Heart left ventricle (tissue), 16 donors: ENCODE measurements at regions of chr20 and their contacts with region 1.

Region 1: GRCh38 chr20:59032023-59032712 is at the start of gene ATP5F1E:
- DNase-seq: peak; percentile 97 to 98 (median 98)
- ATAC-seq: peak; percentile 99 to 100 (median 100)
- H3K4me3 ChIP-seq: peak within 1 kb of the TSS; percentile 59 to 94 (median 83)
- H3K27ac ChIP-seq: peak within 1 kb of the TSS; percentile 83 to 98 (median 92)
- H3K4me1 ChIP-seq: peaks cover 0 to 52% (median 48%) of the 10 kb centered on the region in 12 donors
- H3K27me3 ChIP-seq: no peaks in the 10 kb centered on the region
- CTCF ChIP-seq: peak in 1 of 12 donors; percentile 3
- POLR2A ChIP-seq: peak; percentile 86 to 97
- total RNA-seq, gene ATP5F1E: 38.5 to 153 (median 116) TPM

Region 2: GRCh38 chr20:58907399-58908137 is 124.6 kb before region 1 on chr20:
- intact Hi-C with region 1: loop called in 1 of 10 experiments (anchors 5 kb)
- DNase-seq: peak; percentile 86 to 94 (median 94)
- ATAC-seq: peak; percentile 91 to 98 (median 94)
- H3K4me3 ChIP-seq: peak overlapping the region in 9 of 12 donors; percentile 5 to 46 (median 30)
- H3K27ac ChIP-seq: peak overlapping the region; percentile 64 to 93 (median 84)
- H3K4me1 ChIP-seq: peaks cover 0 to 73% (median 50%) of the 10 kb centered on the region in 12 donors
- H3K27me3 ChIP-seq: no peaks in the 10 kb centered on the region
- CTCF ChIP-seq: no peak
- POLR2A ChIP-seq: no peak

Region 3: GRCh38 chr20:59016795-59017492 is 15.2 kb before region 1 on chr20:
- intact Hi-C with region 1: loop called in 1 of 10 experiments (anchors 2 kb)
- DNase-seq: no peak
- ATAC-seq: peak; percentile 29 to 59 (median 49)
- H3K4me3 ChIP-seq: no peak overlapping the region
- H3K27ac ChIP-seq: peak overlapping the region in 7 of 12 donors; percentile 14 to 52 (median 32)
- H3K4me1 ChIP-seq: peaks cover 0 to 39% (median 14%) of the 10 kb centered on the region in 12 donors
- H3K27me3 ChIP-seq: no peaks in the 10 kb centered on the region
- CTCF ChIP-seq: no peak
- POLR2A ChIP-seq: no peak

Region 4: DNA sequence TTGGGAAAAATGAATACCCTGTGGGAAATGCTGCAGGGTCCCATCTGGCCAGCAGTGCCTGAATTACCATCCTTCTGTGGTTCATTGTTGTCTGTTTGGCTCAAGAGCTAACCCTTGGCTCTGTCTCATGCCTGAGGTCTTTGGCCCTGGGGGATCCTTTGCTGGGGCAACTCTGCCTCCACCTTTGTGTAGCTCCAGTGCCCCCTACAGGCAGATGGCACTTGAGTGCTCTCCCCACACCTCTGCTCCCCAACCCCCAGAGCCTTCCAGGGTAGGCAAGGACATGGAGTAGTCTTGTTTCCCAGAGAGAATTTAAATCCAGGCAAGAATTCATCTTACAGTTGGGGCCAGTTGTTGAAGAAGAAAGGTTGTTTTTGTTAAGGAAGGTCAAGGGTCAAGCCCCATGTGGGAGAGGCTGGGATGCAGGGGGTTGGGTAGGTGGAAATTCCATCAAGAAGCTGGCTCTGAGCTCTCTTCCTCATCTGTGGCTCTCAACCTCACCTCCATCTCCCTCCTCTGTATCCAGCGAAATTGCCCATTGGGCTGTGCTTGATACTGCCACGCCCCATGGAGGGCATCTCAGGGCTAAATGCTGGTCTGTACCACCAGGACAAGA is 175.7 kb after region 1 on chr20:
- intact Hi-C with region 1: no loop called
- DNase-seq: peak; percentile 46 to 75 (median 60)
- ATAC-seq: peak; percentile 55 to 85 (median 80)
- H3K4me3 ChIP-seq: no peak overlapping the region
- H3K27ac ChIP-seq: no peak overlapping the region
- H3K4me1 ChIP-seq: peaks cover 0 to 36% (median 6%) of the 10 kb centered on the region in 12 donors
- H3K27me3 ChIP-seq: peaks cover 0 to 26% (median 0%) of the 10 kb centered on the region in 9 donors
- CTCF ChIP-seq: peak; percentile 40 to 70 (median 58)
- POLR2A ChIP-seq: no peak